Caco-2 (cell line): ENCODE measurements at regions of chr7 and their contacts with region 1.

Region 1: DNA sequence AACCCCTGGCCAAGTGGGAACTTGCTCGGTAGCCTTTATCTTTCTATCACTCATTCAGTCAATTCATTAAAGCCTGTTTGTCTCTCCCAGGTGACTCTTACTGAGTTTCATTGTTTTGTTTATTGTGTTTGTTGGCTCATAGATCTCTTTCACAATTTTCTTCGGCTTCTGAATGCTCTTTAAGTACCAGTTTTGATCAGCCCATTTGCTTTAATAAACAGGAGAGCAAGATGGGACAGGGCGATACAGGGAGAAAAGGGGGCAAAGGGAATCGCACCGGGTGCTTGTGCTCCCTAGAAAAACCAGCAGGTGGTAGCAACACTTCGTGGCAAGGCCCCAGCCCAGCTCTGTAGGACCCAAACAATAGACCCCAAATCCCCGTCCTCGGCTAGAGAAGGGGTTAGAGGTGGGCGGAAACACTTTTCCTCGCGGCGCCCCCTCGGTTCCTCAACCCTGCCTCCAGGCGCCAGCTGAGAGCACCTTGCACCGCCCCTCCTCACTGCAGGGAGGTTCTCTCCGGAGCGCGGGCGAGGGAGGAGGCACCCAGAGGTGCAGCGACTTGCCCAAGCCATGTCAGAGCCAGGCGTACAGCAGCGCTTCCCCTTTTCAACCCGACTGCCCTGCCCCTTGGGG is 1.0 kb upstream of the EPHB6 start:
- DNase-seq: peak; percentile 64 to 75
- H3K4me3 ChIP-seq: peak overlapping the region; percentile 76
- H3K4me3 Mint-ChIP-seq: peak overlapping the region; percentile 91
- H3K27ac Mint-ChIP-seq: peak overlapping the region; percentile 47
- H3K4me1 ChIP-seq: peaks cover 6% of the 10 kb centered on the region; the same call in 1 of the 2 replicates
- H3K4me1 Mint-ChIP-seq: peaks cover 7% of the 10 kb centered on the region
- H3K27me3 ChIP-seq: no peaks in the 10 kb centered on the region; the same call in none of the 2 replicates
- H3K27me3 Mint-ChIP-seq: peaks cover 14% of the 10 kb centered on the region
- CTCF ChIP-seq: peak; percentile 83 to 85

Region 2: DNA sequence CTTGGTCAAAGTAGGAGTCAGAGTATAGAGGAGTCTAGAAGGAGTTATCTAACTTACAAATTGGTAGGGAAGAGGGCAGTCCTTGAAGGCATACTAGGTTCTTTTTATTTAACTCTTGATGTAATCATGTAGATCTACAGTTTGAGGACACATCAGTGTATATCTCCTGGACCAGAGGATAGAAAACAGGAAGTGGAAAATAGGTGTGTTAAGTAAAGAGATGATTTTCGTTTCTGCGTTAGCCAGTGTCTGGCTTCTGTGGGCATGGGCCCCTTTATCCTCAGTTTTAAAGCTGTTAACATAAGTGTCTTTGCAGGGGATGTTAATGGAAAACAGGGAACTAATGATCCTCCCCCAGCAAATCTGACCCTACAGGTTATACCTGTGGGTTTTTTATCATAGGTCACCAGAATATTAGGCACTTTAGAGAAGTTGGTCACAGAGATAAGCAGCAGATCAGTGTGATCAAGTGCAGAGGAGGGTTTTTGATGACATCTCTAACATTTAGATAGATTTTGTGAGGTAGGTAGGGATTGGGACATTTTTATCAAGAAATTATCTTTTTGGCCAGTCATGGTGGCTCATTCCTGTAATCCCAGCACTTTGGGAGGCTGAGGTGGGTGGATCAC is 163.2 kb before region 1 on chr7:
- CTCF ChIA-PET with region 1: no interaction called
- POLR2A ChIA-PET with region 1: no interaction called
- intact Hi-C with region 1: no loop called
- DNase-seq: no peak
- H3K4me3 ChIP-seq: no peak overlapping the region
- H3K4me3 Mint-ChIP-seq: no peak overlapping the region
- H3K27ac Mint-ChIP-seq: no peak overlapping the region
- H3K4me1 ChIP-seq: no peaks in the 10 kb centered on the region
- H3K4me1 Mint-ChIP-seq: no peaks in the 10 kb centered on the region
- H3K27me3 ChIP-seq: no peaks in the 10 kb centered on the region
- H3K27me3 Mint-ChIP-seq: peaks cover 7% of the 10 kb centered on the region
- CTCF ChIP-seq: no peak

Region 3: GRCh38 chr7:142866361-142867058 is 12.7 kb after region 1 on chr7:
- CTCF ChIA-PET with region 1: interaction called, 6 read pairs
- POLR2A ChIA-PET with region 1: no interaction called
- intact Hi-C with region 1: loop called (anchors 1 kb)
- DNase-seq: peak; percentile 61 to 70
- H3K4me3 ChIP-seq: no peak overlapping the region
- H3K4me3 Mint-ChIP-seq: no peak overlapping the region
- H3K27ac Mint-ChIP-seq: no peak overlapping the region
- H3K4me1 ChIP-seq: no peaks in the 10 kb centered on the region
- H3K4me1 Mint-ChIP-seq: no peaks in the 10 kb centered on the region
- H3K27me3 ChIP-seq: no peaks in the 10 kb centered on the region
- H3K27me3 Mint-ChIP-seq: no peaks in the 10 kb centered on the region
- CTCF ChIP-seq: peak; percentile 63 to 74

Region 4: GRCh38 chr7:142925413-142925812 is 71.6 kb after region 1 on chr7:
- CTCF ChIA-PET with region 1: no interaction called
- POLR2A ChIA-PET with region 1: no interaction called
- intact Hi-C with region 1: no loop called
- DNase-seq: no peak
- H3K4me3 ChIP-seq: no peak overlapping the region
- H3K4me3 Mint-ChIP-seq: no peak overlapping the region
- H3K27ac Mint-ChIP-seq: no peak overlapping the region
- H3K4me1 ChIP-seq: peaks cover 20% of the 10 kb centered on the region
- H3K4me1 Mint-ChIP-seq: peaks cover 15% of the 10 kb centered on the region
- H3K27me3 ChIP-seq: no peaks in the 10 kb centered on the region
- H3K27me3 Mint-ChIP-seq: no peaks in the 10 kb centered on the region
- CTCF ChIP-seq: no peak